ENCODE measurements at regions of chr14 and their contacts with region 1.

Region 1: DNA sequence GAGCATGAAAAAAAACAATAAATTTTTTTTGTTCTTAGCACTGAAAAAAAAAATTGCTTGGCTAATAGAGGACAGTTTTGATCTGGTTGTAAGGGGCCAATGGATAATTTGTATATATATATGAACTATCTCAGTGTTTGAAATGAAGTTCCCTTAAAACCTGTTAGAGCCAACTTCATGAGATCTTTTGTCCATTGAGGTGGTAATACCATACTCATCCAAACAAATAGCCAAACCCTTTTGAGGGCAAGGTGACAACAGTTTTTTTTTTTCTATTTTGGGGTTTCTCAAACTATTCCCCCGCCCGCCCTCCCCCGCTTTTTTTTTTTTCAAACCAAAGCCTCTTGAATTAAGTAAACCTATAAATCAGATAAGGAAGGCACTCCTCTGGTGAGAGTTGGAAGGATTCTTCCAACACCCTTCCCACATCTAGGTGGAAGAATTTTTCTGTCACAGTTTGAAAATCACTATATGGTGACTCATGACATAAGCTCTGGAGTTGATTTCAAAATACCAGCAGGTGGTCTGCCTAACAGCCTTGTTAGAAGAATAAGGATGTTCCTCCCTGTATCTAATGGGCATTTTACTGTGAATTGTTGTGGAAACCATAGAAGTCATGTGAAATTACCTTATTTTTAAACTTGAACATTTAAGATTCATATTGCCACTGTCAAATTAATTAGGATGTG is 10.2 kb downstream of the ARHGAP5 start:
- DNase-seq: peak; percentile 50
- H3K4me3 ChIP-seq: no peak overlapping the region
- H3K27ac ChIP-seq: no peak overlapping the region
- H3K4me1 ChIP-seq: peaks cover 22% of the 10 kb centered on the region
- H3K27me3 ChIP-seq: no peaks in the 10 kb centered on the region

Region 2: DNA sequence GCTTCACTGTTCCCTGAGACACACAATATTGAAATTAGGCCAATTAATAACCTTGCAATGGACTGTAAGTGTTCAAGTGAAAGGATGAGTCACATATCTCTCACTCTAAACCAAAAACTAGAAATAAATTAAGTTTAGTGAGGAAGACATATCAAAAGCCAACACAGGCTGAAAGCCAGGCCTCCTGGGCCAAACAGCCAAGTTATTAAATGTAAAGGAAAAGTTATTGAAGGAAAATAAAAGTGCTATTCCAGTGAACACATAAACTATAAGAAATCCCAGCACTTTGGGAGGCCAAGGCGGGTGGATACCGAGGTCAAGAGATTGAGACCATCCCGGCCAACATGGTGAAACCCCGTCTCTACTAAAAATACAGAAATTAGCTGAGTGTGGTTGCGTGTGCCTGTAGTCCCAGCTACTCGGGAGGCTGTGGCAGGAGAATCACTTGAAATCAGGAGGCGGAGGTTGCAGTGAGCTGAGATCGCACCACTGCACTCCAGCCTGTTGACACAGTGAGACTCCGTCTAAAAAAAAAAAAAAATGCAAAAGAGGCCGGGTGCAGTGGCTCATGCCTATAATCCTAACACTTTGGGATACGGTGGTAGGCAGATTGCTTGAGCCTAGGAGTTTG is 656.6 kb before region 1 on chr14:
- in situ Hi-C with region 1: no loop called
- DNase-seq: no peak
- H3K4me3 ChIP-seq: no peak overlapping the region
- H3K27ac ChIP-seq: no peak overlapping the region
- H3K4me1 ChIP-seq: peaks cover 18% of the 10 kb centered on the region
- H3K27me3 ChIP-seq: no peaks in the 10 kb centered on the region

Region 3: DNA sequence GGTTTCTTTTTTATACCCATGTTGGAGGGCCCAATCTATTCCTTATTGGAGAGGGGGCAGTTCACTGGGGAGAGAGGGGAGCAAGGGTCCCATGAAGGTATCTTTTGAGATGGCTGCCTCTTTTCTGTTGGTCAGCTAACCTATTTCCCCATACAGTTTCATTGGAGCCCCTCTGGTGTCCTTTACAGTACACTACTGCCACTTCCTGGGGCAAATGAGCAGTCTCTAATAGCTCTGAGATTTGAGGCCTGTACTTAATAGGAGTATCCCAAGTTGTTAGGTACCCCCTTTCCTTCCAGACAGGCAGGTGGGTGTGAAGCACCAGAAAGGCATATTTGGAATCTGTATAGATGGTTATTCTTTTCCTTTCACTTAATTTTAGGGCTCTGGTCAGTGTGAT is 157.1 kb after region 1 on chr14:
- in situ Hi-C with region 1: loop called (anchors 10 kb)
- DNase-seq: peak; percentile 33
- H3K4me3 ChIP-seq: no peak overlapping the region
- H3K27ac ChIP-seq: no peak overlapping the region
- H3K4me1 ChIP-seq: no peaks in the 10 kb centered on the region
- H3K27me3 ChIP-seq: no peaks in the 10 kb centered on the region

Region 4: DNA sequence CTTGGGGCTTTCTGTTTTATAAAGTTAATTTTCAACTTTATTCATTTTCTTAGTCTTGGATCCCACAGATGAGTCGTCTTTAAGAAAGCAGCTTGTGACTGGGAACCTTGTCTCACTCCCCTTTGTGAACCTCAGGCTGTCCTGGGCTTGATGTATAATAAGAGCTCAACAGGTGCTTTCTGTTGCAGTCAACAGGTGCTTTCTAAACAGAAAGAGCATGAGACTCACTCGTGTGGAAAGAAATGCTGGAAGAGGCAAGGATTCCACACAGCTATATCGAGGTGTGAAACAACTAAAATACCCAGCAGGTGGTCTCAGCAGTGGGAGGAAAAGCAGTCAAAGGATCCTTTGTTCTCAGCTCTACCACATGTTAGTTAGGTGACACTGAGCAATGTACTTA is 1464.6 kb after region 1 on chr14:
- in situ Hi-C with region 1: no loop called
- DNase-seq: no peak
- H3K4me3 ChIP-seq: no peak overlapping the region
- H3K27ac ChIP-seq: no peak overlapping the region
- H3K4me1 ChIP-seq: peaks cover 11% of the 10 kb centered on the region
- H3K27me3 ChIP-seq: no peaks in the 10 kb centered on the region

Measured in GM23248 (cell line).